ENCODE measurements at regions of chrX and their contacts with region 1.

Region 1: DNA sequence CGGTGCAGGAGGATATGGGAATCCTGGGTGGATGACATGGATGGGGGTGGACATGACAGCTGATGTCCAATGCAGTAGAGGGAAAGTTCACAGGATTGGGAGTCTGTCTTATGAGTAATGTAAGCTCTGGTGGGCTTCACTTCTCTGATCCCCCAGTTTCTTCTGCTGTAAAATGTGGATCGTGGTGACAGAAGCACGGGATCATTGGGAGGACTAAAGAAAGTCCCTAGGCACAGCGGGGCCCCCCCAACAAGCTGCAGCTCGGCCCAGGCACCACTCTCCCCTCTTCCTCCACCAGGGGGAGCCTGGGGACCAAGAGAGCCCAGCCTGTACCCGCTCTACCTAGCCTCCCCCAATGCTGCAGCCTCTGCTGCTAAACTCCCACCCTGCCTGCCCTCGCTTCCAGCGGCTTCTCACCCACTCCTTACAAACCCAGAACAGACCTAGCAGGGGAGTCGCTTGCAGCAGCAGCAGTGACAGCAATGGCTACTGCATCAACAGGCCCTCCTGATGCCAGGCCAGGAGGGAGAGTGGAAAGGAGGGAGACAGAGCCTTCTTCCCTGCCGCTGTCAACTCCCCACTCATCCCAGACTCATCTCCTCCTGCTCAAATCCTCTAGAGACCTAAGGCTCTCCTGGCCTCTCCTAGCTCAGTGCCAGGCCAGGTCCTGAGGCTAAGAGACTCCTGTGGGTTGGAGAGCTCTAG is 36.1 kb upstream of the IQSEC2 start:
- DNase-seq: peak; percentile 54
- ATAC-seq: peak; percentile 77
- H3K4me3 Mint-ChIP-seq: no peak overlapping the region
- H3K27ac Mint-ChIP-seq: no peak overlapping the region
- H3K4me1 Mint-ChIP-seq: peaks cover 28% of the 10 kb centered on the region
- H3K27me3 Mint-ChIP-seq: peaks cover 23% of the 10 kb centered on the region
- CTCF ChIP-seq: no peak

Region 2: DNA sequence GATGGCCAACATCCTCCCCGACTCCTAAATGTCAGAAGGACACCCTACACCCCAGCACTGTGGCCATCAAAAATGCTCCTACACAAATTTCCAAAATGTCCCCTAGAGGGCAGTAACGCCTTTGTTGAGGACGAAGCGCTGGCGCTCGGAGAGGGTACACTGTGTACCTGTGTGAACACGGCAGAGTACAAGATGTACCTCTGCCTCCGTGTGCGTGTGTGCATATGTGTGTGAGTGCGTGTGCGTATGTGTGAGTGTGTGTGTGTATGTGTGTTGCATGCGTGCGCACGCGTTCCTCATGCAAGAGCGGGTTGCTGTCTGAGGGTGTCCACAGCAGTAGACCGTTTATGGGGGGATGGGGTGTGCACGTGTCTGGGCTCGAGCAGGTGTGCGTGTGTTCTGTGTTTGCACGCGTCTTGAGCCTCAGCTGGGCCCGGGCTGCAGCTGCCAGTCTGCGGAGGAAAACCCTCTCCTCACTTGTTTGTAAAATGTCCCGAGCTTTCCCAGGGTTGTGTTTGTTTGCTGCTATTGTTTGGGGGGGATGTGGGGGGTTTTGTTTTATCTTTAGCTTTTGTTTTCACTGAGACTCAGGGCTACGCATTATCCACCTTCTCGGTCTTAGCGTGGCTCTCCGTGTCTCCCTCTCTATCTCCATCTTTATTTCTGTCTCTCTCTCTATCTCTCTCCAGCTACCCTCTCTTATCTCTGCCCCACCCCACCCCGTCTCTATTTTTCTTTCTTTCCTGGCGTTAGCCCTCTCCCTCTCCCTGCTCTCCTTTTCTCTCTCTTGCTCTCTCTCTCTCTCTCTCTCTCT is 245.7 kb before region 1 on chrX:
- CTCF ChIA-PET with region 1: no interaction called
- POLR2A ChIA-PET with region 1: no interaction called
- intact Hi-C with region 1: loop called (anchors 10 kb)
- DNase-seq: peak; percentile 32
- ATAC-seq: peak; percentile 84
- H3K4me3 Mint-ChIP-seq: peak overlapping the region; percentile 85
- H3K27ac Mint-ChIP-seq: peak overlapping the region; percentile 90
- H3K4me1 Mint-ChIP-seq: peaks cover 16% of the 10 kb centered on the region
- H3K27me3 Mint-ChIP-seq: no peaks in the 10 kb centered on the region
- CTCF ChIP-seq: no peak

Region 3: GRCh38 chrX:53433651-53434639 is 116.4 kb after region 1 on chrX and contains the start of gene HSD17B10:
- CTCF ChIA-PET with region 1: interaction called, 12 read pairs
- POLR2A ChIA-PET with region 1: interaction called, 4 read pairs
- intact Hi-C with region 1: loop called (anchors 1 kb)
- DNase-seq: peak; percentile 75
- ATAC-seq: peak; percentile 98
- H3K4me3 Mint-ChIP-seq: peak within 1 kb of the TSS; percentile 93
- H3K27ac Mint-ChIP-seq: peak within 1 kb of the TSS; percentile 90
- H3K4me1 Mint-ChIP-seq: peaks cover 12% of the 10 kb centered on the region
- H3K27me3 Mint-ChIP-seq: peaks cover 6% of the 10 kb centered on the region
- CTCF ChIP-seq: no peak
- total RNA-seq, gene HSD17B10: 108 and 114 TPM in 2 replicates

Region 4: DNA sequence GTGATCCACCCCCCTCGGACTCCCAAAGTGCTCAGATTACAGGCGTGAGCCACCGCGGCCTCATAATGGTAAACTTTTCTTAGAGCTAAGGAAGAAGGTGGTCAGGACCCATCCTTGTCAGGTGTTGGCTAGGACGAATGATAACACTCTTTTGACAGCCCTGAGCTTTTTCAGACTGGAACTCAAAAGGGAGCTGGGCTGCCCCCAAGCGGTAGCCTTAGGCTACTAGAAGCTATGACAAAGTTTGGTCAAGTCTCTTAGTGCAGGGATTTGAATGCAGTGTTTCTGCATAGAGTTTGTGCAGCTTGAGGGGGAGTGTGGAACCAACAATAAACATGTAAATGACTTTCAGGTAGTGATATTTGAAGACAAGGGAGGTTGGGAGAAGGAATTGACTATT is 128.5 kb after region 1 on chrX:
- CTCF ChIA-PET with region 1: interaction called, 27 read pairs
- POLR2A ChIA-PET with region 1: no interaction called
- intact Hi-C with region 1: loop called (anchors 1 kb)
- DNase-seq: no peak
- ATAC-seq: no peak
- H3K4me3 Mint-ChIP-seq: no peak overlapping the region
- H3K27ac Mint-ChIP-seq: no peak overlapping the region
- H3K4me1 Mint-ChIP-seq: peaks cover 4% of the 10 kb centered on the region
- H3K27me3 Mint-ChIP-seq: no peaks in the 10 kb centered on the region
- CTCF ChIP-seq: no peak

Region 5: DNA sequence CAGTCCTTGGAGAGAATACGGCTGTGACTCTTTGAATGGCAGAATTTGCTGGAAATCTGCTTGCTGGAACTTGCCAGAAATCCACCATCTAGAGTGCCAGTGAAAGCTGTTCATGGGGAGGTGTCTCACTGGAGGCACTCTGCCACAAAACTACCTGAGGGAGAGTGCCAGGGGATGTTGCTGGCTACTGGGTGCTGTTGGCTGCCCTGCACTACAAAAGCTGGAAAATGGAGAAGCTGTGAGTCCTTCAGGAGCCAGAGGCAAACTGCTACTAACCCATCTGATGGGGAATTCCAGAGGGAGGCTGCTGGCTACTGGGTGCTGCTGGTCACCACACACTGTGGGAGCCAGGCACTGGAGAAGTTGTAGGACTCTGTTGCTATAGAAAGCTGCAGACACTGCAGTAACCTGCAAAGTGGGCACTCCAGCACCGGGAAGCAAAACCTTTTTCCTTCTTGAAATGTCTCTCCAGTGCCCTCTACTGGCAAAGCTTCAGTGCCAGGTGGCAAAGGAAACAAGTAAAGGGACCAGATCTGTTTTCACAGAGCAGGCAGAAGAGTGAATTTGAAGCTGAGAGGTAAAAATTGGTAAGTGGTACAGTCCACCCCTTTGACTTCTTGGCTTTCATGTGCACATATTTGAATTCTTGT is 164.4 kb after region 1 on chrX:
- CTCF ChIA-PET with region 1: interaction called, 24 read pairs
- POLR2A ChIA-PET with region 1: interaction called, 3 read pairs
- intact Hi-C with region 1: loop called (anchors 1 kb)
- DNase-seq: peak; percentile 12
- ATAC-seq: no peak
- H3K4me3 Mint-ChIP-seq: no peak overlapping the region
- H3K27ac Mint-ChIP-seq: no peak overlapping the region
- H3K4me1 Mint-ChIP-seq: peaks cover 2% of the 10 kb centered on the region
- H3K27me3 Mint-ChIP-seq: no peaks in the 10 kb centered on the region
- CTCF ChIP-seq: no peak

Region 6: DNA sequence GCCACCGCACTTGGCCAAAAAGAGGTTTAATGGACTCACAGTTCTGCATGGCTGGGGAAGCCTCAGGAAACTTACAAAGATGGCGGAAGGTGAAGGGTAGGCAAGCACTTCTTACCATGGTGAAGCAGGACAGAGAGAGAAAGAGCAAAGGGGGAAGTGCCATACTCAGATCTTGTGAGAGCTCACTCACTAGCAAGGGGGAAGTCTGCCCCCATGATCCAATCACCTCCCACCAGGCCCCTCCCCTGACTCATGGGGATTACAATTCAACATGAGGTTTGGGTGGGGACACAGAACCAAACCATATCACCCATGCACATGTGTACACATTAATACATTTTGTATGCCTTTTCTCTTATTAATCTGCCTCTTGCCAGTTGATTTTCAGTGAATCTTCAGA is 193.8 kb after region 1 on chrX:
- CTCF ChIA-PET with region 1: no interaction called
- POLR2A ChIA-PET with region 1: no interaction called
- intact Hi-C with region 1: no loop called
- DNase-seq: no peak
- ATAC-seq: no peak
- H3K4me3 Mint-ChIP-seq: no peak overlapping the region
- H3K27ac Mint-ChIP-seq: no peak overlapping the region
- H3K4me1 Mint-ChIP-seq: no peaks in the 10 kb centered on the region
- H3K27me3 Mint-ChIP-seq: no peaks in the 10 kb centered on the region
- CTCF ChIP-seq: no peak